Left ventricle myocardium inferior (tissue), 1 donor: ENCODE measurements at regions of chr12 and their contacts with region 1.

Region 1: DNA sequence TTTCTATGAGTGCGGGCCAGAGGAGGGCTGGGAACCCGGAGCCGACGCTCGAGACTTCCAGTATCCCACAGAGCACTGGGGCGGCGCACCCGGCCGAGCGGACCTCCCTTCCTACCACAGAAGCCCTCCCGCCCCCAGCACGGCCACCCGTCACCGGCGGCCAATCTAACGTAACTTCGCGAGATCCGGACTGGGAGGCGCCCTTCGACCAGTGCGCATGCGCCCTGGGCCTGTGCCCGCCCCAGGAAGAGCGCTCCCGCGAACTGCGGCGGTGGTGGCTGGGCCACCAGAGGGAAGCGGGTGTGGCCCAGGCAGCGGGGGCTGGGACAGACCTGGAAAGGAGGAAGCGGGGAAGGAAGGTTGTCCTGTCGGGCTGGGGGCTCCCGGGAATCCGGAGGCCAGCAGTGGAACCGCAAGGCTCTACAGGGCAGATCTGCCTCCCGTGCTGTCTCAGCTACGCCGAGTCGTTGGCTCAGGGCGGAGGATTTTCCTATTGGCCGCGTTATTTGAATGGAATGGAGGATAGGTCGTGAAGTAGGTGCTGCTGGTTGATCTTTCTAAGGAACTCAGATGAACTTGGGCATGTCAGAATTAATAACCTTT is at the start of gene PPP1R12A:
- DNase-seq: peak; percentile 98
- H3K4me3 ChIP-seq: peak within 1 kb of the TSS; percentile 92
- H3K27ac ChIP-seq: peak within 1 kb of the TSS; percentile 96
- H3K4me1 ChIP-seq: peaks cover 70% of the 10 kb centered on the region
- H3K27me3 ChIP-seq: no peaks in the 10 kb centered on the region
- CTCF ChIP-seq: peak; percentile 45
- total RNA-seq, gene PPP1R12A: 42.8 TPM

Region 2: GRCh38 chr12:79597910-79598309 is 337.2 kb before region 1 on chr12:
- intact Hi-C with region 1: no loop called
- DNase-seq: no peak
- H3K4me3 ChIP-seq: no peak overlapping the region
- H3K27ac ChIP-seq: no peak overlapping the region
- H3K4me1 ChIP-seq: no peaks in the 10 kb centered on the region
- H3K27me3 ChIP-seq: no peaks in the 10 kb centered on the region
- CTCF ChIP-seq: no peak

Region 3: DNA sequence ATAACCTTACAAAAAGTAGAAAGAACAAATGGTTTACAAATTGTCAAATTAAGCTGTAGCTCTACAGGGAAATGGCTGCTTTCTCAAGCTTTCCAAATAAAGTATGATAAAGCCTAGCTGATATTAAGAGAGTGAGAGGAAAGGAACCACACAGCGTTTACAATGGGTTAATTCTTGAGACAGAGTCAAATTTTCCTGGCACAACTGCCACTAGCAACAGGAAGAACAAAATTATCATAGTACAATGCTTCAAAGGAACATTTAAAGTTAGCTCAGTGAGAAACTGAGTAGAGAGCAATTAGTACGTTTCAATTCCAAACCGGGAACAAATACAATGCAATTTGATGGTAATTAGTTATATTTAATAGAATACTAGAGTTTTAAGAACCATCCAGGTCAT is 116.3 kb before region 1 on chr12:
- intact Hi-C with region 1: loop called (anchors 10 kb)
- DNase-seq: no peak
- H3K4me3 ChIP-seq: peak overlapping the region; percentile 20
- H3K27ac ChIP-seq: peak overlapping the region; percentile 79
- H3K4me1 ChIP-seq: peaks cover 55% of the 10 kb centered on the region
- H3K27me3 ChIP-seq: no peaks in the 10 kb centered on the region
- CTCF ChIP-seq: no peak

Region 4: DNA sequence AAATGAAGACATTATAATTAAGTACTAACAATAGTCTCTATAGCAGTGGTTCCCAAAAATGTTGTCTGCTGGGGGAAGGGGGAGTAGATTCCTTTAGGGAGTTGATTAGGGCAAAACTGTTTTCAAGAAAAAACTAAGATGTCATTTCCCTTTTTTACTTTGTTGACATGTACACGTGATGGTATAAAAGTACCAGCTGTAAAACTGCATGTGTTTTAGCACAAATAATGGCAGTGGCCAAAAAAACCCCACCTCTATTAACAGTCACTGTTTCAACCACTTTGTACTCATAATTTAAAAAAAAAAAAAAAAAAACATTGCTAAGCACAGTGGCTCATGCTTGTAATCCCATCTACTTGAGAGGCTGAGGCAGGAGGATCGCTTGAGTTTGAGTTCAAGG is 61.9 kb before region 1 on chr12:
- intact Hi-C with region 1: no loop called
- DNase-seq: no peak
- H3K4me3 ChIP-seq: no peak overlapping the region
- H3K27ac ChIP-seq: no peak overlapping the region
- H3K4me1 ChIP-seq: peaks cover 68% of the 10 kb centered on the region
- H3K27me3 ChIP-seq: no peaks in the 10 kb centered on the region
- CTCF ChIP-seq: no peak

Region 5: DNA sequence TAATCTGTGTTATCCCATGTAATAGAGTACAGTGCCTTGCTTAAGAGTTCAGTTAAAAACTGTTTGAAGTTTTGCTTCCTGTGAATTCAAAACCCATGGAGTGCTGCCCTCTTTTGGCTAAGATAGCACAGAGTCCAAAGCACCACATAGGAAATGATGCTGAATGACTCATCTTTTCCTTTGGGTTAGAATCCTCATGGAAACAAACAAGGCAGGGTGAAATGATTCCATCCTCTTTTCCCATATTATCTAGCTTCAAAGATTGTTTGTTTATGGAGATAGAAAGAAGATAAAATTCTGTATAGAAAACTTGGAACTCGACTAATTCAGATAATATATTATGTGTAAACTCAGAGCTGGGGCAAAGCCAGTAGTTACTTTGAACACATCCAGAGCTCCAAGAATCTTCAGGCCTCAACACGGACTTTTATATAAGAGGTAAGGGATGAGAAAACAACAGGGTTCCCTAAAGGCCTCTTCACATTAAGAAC is 251.7 kb after region 1 on chr12:
- intact Hi-C with region 1: loop called (anchors 10 kb)
- DNase-seq: no peak
- H3K4me3 ChIP-seq: peak overlapping the region; percentile 9
- H3K27ac ChIP-seq: peak overlapping the region; percentile 91
- H3K4me1 ChIP-seq: peaks cover 38% of the 10 kb centered on the region
- H3K27me3 ChIP-seq: no peaks in the 10 kb centered on the region
- CTCF ChIP-seq: peak; percentile 86